H1 (cell line): ENCODE measurements at regions of chr14 and their contacts with region 1.

Region 1: DNA sequence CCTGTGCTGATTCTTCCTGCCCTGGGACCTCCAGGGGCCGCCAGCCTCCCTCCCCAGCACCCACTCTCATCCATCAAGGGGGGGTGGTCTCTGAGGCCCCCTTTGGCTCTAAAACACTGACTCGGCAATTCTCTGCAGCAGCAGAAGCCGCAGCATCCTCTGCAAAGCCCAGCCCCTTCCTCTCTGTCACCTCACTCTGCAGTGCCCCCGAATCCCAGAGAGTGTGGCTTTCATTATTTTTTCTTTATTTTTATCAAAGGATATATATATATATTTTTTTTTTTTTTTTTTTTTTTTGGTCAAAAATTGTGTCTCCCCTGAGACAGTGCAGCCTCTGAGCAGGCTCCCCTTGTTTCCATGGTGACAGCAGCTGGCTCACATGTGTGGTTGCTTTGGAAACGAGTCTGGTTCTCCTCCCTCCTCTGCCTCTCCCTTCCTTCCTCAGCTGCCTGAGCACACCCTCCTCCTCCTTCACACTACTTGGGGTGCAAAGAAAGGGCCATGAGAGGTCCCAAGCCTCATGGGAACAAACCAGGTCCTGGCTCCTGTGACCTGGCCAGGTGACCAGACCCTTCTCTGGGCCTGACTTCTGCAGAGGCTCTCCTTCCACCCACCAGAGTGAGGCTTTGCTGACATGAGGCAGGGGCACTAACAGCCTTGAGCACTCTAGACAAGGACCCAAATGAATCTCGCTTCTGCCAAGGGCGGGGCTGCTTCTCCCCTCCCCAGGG is 100.5 kb downstream of the LRRC74A start:
- DNase-seq: no peak
- H3K4me3 ChIP-seq: no peak overlapping the region
- H3K27ac ChIP-seq: no peak overlapping the region
- H3K4me1 ChIP-seq: peaks cover 15 to 48% (median 33%) of the 10 kb centered on the region in 4 experiments
- H3K27me3 ChIP-seq: no peaks in the 10 kb centered on the region
- CTCF ChIP-seq: no peak
- EP300 ChIP-seq: no peak
- POLR2A ChIP-seq: no peak
- RAD21 ChIP-seq: 0 out of 4 replicates have a peak, but pooled peaks of 1 of the 2 experiments have one; percentile 10

Region 2: DNA sequence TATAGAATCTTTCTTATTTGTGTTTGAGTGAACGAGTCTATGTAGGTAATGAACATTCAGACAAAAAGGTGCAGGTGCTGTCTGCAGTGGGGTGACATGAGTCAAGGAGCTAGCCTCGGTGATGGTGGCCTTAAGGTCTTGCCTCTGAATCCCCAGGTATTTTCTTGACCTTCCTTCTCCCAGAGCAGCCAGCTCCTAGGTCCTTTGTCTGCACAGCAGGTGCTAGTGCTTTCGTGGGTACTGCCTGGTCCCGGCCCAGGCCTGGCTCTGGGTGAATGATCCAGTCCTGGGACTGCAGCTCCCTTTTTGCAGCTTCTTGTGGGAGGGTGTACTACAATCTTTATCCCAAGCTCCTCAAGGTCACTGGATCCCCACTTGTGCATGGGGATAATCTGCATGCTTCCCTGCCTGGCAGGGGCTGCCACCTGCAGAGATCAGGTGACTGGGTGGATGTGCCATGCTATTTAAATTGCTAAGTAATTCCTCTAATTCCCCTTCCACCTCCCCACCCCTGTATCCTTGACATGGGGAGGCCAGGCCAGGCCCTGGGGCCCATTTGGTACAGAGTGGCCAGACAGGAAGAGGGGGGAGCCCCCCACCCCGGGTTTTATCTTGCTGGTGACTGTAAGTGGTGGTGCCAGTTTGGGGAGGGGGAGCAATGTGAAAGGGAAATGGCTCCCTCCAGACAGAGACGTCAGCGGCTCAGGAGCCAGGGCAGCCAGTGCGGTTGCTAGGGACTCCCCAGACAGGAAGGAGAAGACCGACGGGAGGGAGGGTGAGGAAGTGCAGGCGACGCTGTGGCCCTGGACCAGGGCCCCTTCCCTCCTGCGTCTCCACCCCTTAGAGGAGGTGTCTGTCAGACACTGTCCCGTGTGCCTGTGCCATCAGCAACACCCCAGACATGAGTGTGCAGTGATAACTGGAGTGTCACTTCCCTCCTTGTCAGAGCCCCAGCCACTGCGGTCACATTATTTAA is 158.7 kb before region 1 on chr14:
- CTCF ChIA-PET with region 1: no interaction called
- POLR2A ChIA-PET with region 1: no interaction called
- DNase-seq: peak in 1 of 2 experiments; percentile 71
- H3K4me3 ChIP-seq: peak overlapping the region in 1 of 4 experiments; percentile 30; a peak in 3 of 8 replicates
- H3K27ac ChIP-seq: no peak overlapping the region
- H3K4me1 ChIP-seq: peaks cover 0 to 22% (median 19%) of the 10 kb centered on the region in 4 experiments; a peak in 5 of 7 replicates
- H3K27me3 ChIP-seq: peaks cover 4 to 15% (median 13%) of the 10 kb centered on the region in 4 experiments
- CTCF ChIP-seq: no peak
- EP300 ChIP-seq: no peak
- POLR2A ChIP-seq: no peak
- RAD21 ChIP-seq: no peak

Region 3: DNA sequence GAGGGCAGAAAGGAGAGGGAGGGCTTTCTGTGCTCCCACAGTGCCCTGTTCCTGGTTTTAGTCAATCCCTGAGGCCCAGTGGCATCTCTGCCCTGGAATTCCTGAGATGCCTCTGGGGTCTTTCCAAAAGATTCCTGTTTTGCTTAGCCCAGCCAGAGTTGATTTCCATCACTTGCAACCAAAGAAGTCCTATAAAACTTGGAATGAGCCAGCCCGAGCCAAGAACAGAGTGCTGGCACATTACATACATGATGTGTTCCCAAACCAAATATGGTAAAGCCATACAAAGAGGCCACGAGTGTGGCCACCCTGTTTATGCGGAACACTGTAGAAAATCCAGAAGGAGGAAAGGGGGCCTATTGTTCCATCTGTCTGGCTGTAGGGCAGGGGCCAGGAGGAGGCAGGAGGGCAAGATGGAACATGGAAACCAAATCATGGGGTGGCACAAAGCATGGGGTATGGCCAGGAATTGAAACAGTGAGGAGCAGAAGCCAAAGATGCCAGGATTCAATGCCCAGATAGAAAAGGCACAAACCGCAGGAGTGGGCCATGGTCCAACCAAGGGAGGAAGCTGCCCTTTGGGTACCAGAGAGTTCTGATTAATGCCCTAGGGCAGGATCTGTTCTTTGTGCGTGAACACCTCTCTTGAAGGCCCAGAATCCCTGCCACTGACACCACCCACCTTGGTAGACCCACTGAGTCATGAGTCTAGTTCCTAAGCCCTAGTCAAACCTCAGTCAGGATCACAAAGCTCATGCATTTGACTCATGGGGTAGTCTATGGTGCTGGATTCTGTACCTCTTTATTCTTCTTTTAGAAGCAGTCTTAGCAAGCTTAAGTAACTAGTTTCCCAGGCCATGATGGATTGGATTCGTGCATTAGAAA is 25.3 kb before region 1 on chr14:
- CTCF ChIA-PET with region 1: no interaction called
- POLR2A ChIA-PET with region 1: no interaction called
- DNase-seq: no peak
- H3K4me3 ChIP-seq: no peak overlapping the region
- H3K27ac ChIP-seq: no peak overlapping the region
- H3K4me1 ChIP-seq: peaks cover 0 to 3% (median 1%) of the 10 kb centered on the region in 4 experiments; a peak in 1 of 7 replicates
- H3K27me3 ChIP-seq: no peaks in the 10 kb centered on the region
- CTCF ChIP-seq: no peak
- EP300 ChIP-seq: no peak
- POLR2A ChIP-seq: no peak
- RAD21 ChIP-seq: no peak

Region 4: DNA sequence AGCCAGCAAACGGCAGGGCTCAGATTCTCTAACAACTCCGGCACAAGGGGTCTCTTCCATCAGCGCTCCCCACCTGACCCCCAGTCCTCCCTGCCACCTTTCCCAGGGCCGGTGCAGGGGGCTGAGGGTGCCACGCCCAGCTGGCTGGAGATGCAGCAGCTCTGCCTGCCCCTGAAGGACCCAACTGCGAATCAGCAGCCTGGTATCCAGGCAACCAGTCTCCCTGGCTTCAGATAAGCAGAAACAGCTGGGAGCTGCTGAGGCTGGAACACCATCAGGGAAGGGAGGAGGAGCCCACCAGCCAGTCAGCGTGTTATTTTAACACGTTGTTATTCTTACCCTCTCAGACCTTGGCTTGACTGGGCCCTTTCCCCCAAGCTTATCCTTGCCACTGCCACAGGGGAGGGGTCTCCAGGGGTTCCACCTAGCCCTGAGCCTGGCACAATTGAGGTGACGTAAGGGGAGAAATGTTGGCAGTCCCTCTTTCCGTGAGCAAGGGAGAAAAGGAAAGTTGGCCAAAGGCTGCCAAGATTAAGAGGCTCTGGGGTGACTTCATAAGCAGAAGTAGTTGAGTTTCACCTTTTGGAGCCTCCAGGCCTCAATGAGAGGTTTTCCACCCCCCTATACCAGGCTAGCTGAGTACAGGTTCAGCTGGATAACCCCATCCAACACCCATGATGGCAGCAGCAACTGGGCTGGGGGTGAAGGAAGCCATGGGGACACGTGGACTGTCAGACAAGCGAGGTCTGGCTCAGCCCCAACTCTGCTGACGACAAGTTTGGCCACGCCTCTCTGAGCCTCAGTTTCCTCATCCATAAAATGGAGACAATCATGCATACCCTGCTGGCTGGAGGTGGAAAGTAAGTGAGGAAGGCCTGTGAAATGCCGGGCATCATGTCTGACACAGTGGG is 10.8 kb after region 1 on chr14:
- CTCF ChIA-PET with region 1: interaction called, 403 read pairs
- POLR2A ChIA-PET with region 1: interaction called, 18 read pairs
- DNase-seq: no peak
- H3K4me3 ChIP-seq: no peak overlapping the region
- H3K27ac ChIP-seq: peak overlapping the region; percentile 10; the same call in 1 of the 2 replicates
- H3K4me1 ChIP-seq: peaks cover 0 to 29% (median 16%) of the 10 kb centered on the region in 4 experiments; a peak in 6 of 7 replicates
- H3K27me3 ChIP-seq: no peaks in the 10 kb centered on the region
- CTCF ChIP-seq: no peak
- EP300 ChIP-seq: no peak
- POLR2A ChIP-seq: no peak
- RAD21 ChIP-seq: no peak

Region 5: GRCh38 chr14:76947078-76947837 is 20.6 kb after region 1 on chr14:
- CTCF ChIA-PET with region 1: interaction called, 403 read pairs
- POLR2A ChIA-PET with region 1: interaction called, 10 read pairs
- DNase-seq: peak; percentile 84 to 93
- H3K4me3 ChIP-seq: peak overlapping the region in 3 of 4 experiments; percentile 20 to 45 (median 27); a peak in 5 of 8 replicates
- H3K27ac ChIP-seq: peak overlapping the region; percentile 71
- H3K4me1 ChIP-seq: peaks cover 16 to 20% (median 19%) of the 10 kb centered on the region in 4 experiments
- H3K27me3 ChIP-seq: no peaks in the 10 kb centered on the region
- CTCF ChIP-seq: peak; percentile 35 to 42 (median 38)
- EP300 ChIP-seq: peak in 1 of 2 experiments; percentile 41; a peak in 1 of 3 replicates
- POLR2A ChIP-seq: no peak
- RAD21 ChIP-seq: peak; percentile 53 to 67

Region 6: GRCh38 chr14:77028384-77029231 is 101.9 kb after region 1 on chr14 and contains the start of gene IRF2BPL:
- CTCF ChIA-PET with region 1: interaction called, 280 read pairs
- POLR2A ChIA-PET with region 1: interaction called, 78 read pairs
- DNase-seq: peak in 1 of 2 experiments; percentile 88
- H3K4me3 ChIP-seq: peak within 1 kb of the TSS; percentile 61 to 86 (median 70)
- H3K27ac ChIP-seq: peak within 1 kb of the TSS; percentile 91
- H3K4me1 ChIP-seq: peaks cover 6 to 40% (median 27%) of the 10 kb centered on the region in 4 experiments
- H3K27me3 ChIP-seq: peaks cover 0 to 5% (median 3%) of the 10 kb centered on the region in 4 experiments; a peak in 5 of 7 replicates
- CTCF ChIP-seq: no peak
- EP300 ChIP-seq: 0 out of 3 replicates have a peak, but pooled peaks of 1 of the 2 experiments have one; percentile 42
- POLR2A ChIP-seq: peak in 1 of 2 experiments; percentile 85; a peak in 2 of 3 replicates
- RAD21 ChIP-seq: peak; percentile 0 to 1; a peak in 2 of 4 replicates
- total RNA-seq, gene IRF2BPL: 57.0 and 59.6 TPM in 2 replicates